IMR-90 (cell line): ENCODE measurements at regions of chr11 and their contacts with region 1.

Region 1: GRCh38 chr11:101456812-101457211 is 127.0 kb downstream of the TRPC6 start:
- DNase-seq: peak; percentile 52
- ATAC-seq: peak; percentile 56
- H3K4me3 ChIP-seq: no peak overlapping the region
- H3K27ac ChIP-seq: no peak overlapping the region
- H3K4me1 ChIP-seq: peaks cover 5% of the 10 kb centered on the region; the same call in 1 of the 2 replicates
- H3K27me3 ChIP-seq: no peaks in the 10 kb centered on the region
- CTCF ChIP-seq: peak; percentile 68
- POLR2A ChIP-seq: no peak
- RAD21 ChIP-seq: peak; percentile 70

Region 2: DNA sequence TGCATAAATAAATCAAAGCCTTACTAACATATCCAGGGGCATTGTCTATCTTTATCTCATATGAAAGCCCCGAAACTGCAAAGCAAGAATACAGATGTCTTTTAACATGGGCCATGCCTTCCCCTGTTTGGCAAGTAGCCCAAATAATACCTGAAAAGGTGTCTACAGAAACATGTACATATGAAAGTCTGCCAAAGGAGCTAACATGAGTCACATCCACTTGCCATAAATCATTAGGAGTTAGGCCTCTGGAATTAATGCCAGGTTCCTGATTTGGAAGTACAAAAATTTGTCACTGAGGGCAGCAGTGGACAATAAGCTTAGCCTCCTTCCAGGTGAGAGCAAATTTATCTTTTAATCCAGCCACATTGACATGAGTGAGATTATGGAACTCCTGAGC is 241.7 kb before region 1 on chr11:
- CTCF ChIA-PET with region 1: no interaction called
- POLR2A ChIA-PET with region 1: no interaction called
- dilution Hi-C with region 1: no loop called
- in situ Hi-C with region 1: no loop called
- intact Hi-C with region 1: no loop called
- DNase-seq: no peak
- ATAC-seq: no peak
- H3K4me3 ChIP-seq: no peak overlapping the region
- H3K27ac ChIP-seq: no peak overlapping the region
- H3K4me1 ChIP-seq: no peaks in the 10 kb centered on the region
- H3K27me3 ChIP-seq: no peaks in the 10 kb centered on the region
- CTCF ChIP-seq: no peak
- POLR2A ChIP-seq: no peak
- RAD21 ChIP-seq: no peak

Region 3: GRCh38 chr11:101775033-101775432 is 318.2 kb after region 1 on chr11:
- CTCF ChIA-PET with region 1: no interaction called
- POLR2A ChIA-PET with region 1: no interaction called
- dilution Hi-C with region 1: no loop called
- in situ Hi-C with region 1: no loop called
- intact Hi-C with region 1: loop called (anchors 5 kb)
- DNase-seq: peak; percentile 92
- ATAC-seq: peak; percentile 88
- H3K4me3 ChIP-seq: no peak overlapping the region
- H3K27ac ChIP-seq: no peak overlapping the region
- H3K4me1 ChIP-seq: peaks cover 12% of the 10 kb centered on the region
- H3K27me3 ChIP-seq: no peaks in the 10 kb centered on the region
- CTCF ChIP-seq: no peak
- POLR2A ChIP-seq: no peak
- RAD21 ChIP-seq: no peak